Activated CD8-positive, alpha-beta T cell treated with anti-CD3 and anti-CD28 coated beads, Interleukin-2, amount 10 ng/mL, durations not matched to agents 7 days and 5 days (primary cell): ENCODE measurements at regions of chr15 and their contacts with region 1.

Region 1: DNA sequence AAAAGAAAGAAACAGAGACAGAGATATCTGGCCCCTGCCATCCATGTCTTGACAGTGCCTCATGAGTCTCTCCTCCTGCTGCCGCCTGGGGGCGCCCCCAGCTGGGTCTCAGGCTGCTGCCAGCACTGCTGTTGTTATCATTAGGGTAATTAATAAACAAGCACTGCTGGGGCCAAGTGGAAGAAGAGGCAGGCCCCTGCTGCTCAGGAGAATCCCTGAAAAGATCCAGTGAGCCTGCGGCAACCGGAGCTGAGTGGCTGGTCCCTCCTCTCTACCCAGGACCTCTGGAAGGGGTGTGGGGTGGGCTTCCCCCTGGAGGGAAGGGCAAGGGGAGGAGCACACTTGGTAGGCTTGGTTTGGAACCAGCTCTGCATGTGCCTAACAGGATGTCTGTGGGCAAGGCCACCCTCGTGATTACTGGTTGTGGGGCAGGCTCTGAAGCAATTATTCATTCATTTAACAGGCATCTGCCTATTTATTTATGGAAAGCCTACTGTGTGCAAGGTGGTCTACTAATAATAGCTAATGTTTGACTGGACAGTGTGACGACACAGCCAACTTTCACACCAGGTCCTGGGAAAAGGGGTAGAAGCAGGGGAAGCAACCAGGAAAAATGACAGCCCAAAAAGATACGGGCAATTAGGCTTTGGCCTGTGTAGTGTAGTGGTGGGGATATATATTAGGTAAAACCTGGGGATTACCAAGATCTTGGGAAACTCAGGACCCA is 1.2 kb upstream of the TYRO3 start:
- DNase-seq: peak; percentile 76
- ATAC-seq: peak; percentile 76
- H3K4me3 Mint-ChIP-seq: peak overlapping the region; percentile 74
- H3K27ac Mint-ChIP-seq: peak overlapping the region; percentile 65
- H3K4me1 Mint-ChIP-seq: peaks cover 22% of the 10 kb centered on the region
- H3K27me3 Mint-ChIP-seq: peaks cover 47% of the 10 kb centered on the region

Region 2: GRCh38 chr15:41544650-41545015 is 13.2 kb before region 1 on chr15:
- CTCF ChIA-PET with region 1: interaction called, 6 read pairs
- POLR2A ChIA-PET with region 1: interaction called, 13 read pairs
- DNase-seq: no peak
- ATAC-seq: no peak
- H3K4me3 Mint-ChIP-seq: peak overlapping the region; percentile 98
- H3K27ac Mint-ChIP-seq: peak overlapping the region; percentile 91
- H3K4me1 Mint-ChIP-seq: peaks cover 19% of the 10 kb centered on the region
- H3K27me3 Mint-ChIP-seq: no peaks in the 10 kb centered on the region

Region 3: GRCh38 chr15:41603941-41604911 is 46.4 kb after region 1 on chr15:
- CTCF ChIA-PET with region 1: interaction called, 10 read pairs
- POLR2A ChIA-PET with region 1: no interaction called
- DNase-seq: peak; percentile 66
- ATAC-seq: peak; percentile 88
- H3K4me3 Mint-ChIP-seq: peak overlapping the region; percentile 32
- H3K27ac Mint-ChIP-seq: no peak overlapping the region
- H3K4me1 Mint-ChIP-seq: peaks cover 9% of the 10 kb centered on the region
- H3K27me3 Mint-ChIP-seq: peaks cover 25% of the 10 kb centered on the region